ENCODE measurements at regions of chr3 and their contacts with region 1.

Region 1: DNA sequence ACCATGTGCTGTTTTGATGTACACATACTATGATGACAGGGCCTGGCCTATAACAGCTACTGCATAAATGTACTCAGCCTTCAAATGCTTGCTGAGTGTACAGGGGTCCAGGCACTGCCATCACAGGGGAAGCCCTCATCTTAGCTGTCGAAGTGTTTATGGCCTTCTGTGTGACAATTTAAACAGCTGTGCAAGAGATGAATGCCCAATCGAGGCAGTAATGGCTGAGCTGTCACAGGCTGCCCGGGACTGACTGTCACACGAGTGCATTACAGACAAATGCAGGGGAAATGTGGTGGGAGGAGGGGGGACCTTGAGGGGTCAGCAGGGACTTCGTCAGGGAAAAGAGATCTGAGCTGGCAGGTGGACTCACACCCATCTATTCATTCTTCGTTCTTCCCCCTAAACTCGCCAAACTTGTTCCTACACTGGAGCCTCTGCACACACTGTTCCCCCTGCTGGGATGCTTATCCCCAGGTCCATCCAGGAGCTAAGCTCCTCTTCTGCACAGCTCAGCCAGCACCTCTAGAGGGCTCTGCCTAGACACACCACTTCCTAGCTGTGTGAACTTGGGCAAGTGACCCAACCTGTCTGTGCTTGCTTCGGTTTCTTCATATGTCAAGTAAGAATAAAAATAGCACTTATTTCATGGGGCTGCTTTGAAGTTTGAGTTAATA is 156.2 kb upstream of the IQSEC1 start:
- DNase-seq: peak in 1 of 2 experiments; percentile 59
- H3K4me3 ChIP-seq: no peak overlapping the region
- H3K27ac ChIP-seq: no peak overlapping the region
- H3K4me1 ChIP-seq: peaks cover 0 to 3% (median under 1%) of the 10 kb centered on the region in 4 experiments; a peak in 2 of 7 replicates
- H3K27me3 ChIP-seq: no peaks in the 10 kb centered on the region
- CTCF ChIP-seq: peak in 2 of 3 experiments; percentile 78 to 92; a peak in 3 of 4 replicates
- EP300 ChIP-seq: peak in 1 of 2 experiments; percentile 33; a peak in 1 of 3 replicates
- POLR2A ChIP-seq: no peak
- RAD21 ChIP-seq: peak; percentile 65 to 81

Region 2: DNA sequence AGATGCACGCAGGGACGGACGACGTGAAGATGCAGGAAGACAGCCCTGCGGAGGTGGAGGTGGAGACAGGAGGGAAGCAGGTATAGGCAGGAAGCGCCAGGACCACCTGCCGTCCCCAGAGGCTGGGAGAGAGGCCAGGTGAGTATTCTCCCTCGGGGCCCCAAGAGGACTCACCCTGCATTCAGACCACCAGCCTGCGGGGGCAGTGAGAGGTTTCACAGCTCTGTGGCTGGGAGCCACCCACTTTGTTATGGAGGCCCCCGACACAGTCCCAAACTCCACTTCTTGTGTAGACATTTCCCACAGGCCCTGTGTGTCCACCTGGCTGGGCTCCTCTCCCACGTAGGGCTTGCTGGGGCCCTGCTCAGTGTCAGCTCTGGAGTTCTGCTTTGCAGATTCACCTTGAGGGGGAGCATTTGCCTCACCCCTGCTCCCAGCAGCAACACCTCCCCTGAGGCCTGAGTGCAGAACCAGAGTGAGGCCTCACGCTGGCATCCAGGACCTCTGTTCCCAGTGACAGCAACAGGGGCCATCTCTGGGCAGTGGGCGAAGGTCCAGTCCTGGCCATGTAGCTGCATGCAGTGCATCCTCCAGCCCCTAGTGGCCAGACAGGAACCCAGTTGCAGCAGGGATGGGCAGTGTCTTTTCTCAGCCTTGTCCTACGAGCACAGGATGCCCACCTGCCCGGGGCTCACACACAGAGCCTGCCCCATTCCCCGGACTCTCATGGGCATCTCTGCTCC is 36.8 kb before region 1 on chr3:
- CTCF ChIA-PET with region 1: interaction called, 14 read pairs
- POLR2A ChIA-PET with region 1: no interaction called
- DNase-seq: no peak
- H3K4me3 ChIP-seq: no peak overlapping the region
- H3K27ac ChIP-seq: no peak overlapping the region
- H3K4me1 ChIP-seq: peaks cover 0 to 7% (median 2%) of the 10 kb centered on the region in 4 experiments; a peak in 4 of 7 replicates
- H3K27me3 ChIP-seq: no peaks in the 10 kb centered on the region
- CTCF ChIP-seq: peak in 2 of 3 experiments; percentile 56 to 84; a peak in 3 of 4 replicates
- EP300 ChIP-seq: no peak
- POLR2A ChIP-seq: no peak
- RAD21 ChIP-seq: peak in 1 of 2 experiments; percentile 44; a peak in 2 of 4 replicates

Region 3: DNA sequence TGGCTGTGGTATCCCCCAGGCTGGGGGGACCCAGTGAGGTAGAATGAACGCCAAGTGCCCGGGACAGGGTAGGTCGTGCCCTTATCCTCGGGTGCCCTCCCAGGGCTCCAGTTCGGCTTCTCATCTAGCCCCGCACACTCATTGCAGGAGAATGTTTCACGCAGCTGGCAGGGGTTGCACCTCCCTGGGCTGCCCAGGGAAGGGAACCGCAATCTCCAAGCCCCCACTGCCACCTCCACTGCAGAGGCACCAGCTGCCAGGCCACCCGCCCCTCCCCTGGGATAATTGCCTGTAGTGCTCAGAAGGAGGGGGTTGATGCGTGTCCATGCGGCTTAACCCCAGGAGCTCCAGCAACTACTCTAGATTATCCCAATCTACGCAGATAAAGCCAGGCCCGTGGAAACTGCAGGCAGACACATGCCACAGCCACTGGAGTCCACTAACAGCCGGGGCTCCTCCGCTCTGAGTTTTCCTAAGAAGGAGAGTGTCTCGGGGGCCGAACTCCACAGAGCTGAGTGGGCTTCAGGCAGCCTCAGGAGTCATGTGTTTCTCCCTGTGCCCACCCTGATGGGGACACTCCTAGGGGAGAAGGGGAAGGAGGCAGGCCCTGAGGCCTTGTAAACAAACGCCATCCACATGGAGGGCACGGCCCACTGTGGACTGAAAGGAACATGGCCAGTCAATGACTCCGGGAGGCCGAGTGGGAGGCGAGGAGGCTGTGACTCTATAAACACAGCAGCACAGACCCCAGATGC is 19.0 kb before region 1 on chr3:
- CTCF ChIA-PET with region 1: interaction called, 15 read pairs
- POLR2A ChIA-PET with region 1: interaction called, 3 read pairs
- DNase-seq: no peak
- H3K4me3 ChIP-seq: no peak overlapping the region
- H3K27ac ChIP-seq: no peak overlapping the region
- H3K4me1 ChIP-seq: no peaks in the 10 kb centered on the region
- H3K27me3 ChIP-seq: 0 out of 7 replicates have a peak, but pooled peaks cover 0 to 1% (median 0%) of the 10 kb centered on the region in 4 experiments
- CTCF ChIP-seq: no peak
- EP300 ChIP-seq: no peak
- POLR2A ChIP-seq: no peak
- RAD21 ChIP-seq: no peak

Region 4: GRCh38 chr3:13245615-13245978 is 16.2 kb after region 1 on chr3:
- CTCF ChIA-PET with region 1: interaction called, 49 read pairs
- POLR2A ChIA-PET with region 1: interaction called, 4 read pairs
- DNase-seq: no peak
- H3K4me3 ChIP-seq: no peak overlapping the region
- H3K27ac ChIP-seq: no peak overlapping the region
- H3K4me1 ChIP-seq: peaks cover 0 to 4% (median 0%) of the 10 kb centered on the region in 4 experiments; a peak in 3 of 7 replicates
- H3K27me3 ChIP-seq: no peaks in the 10 kb centered on the region
- CTCF ChIP-seq: no peak
- EP300 ChIP-seq: no peak
- POLR2A ChIP-seq: no peak
- RAD21 ChIP-seq: no peak

Region 5: DNA sequence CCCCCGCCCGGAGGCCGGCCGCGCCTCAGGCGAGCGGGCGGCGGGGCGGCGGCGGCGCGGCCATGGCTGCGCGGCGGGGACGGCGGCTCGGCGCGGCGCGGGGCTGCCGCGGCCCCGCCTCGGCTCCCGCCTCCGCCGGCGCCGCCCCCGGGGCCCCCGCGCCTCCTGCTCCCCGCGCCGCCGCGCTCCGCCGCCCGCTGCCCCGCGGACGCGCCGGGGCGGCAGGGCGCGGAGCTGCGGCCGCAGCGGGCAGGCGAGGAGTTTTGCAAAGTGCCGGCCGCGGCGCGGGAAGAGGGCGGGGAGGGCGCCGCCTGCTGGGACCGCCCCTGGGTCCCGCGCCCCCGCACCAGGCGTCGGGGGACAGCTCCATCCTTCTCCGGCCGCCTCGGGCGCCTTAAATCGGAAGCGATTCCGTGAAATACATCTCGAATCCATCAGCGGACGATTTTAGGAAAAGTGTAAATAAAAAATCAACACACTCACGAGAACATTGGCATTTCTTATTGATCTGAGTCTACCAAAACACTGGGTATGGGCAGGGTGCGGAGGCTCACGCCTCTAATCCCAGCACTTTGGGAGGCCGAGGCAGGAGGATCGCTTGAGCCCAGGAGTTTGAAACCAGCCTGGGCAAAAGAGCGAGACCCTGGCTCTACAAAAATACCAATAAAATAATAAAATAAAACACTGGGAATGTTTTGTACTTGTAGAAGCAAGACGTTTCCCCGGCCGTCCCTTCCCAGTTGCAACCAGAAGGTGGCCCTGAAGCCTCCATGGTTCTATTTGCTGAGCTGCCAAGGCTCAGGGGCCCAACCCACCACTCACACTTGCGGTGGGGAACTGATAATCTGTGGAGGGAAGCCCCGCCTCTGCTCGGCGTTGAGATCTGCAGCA is 53.8 kb after region 1 on chr3:
- CTCF ChIA-PET with region 1: interaction called, 12 read pairs
- POLR2A ChIA-PET with region 1: no interaction called
- DNase-seq: peak in 1 of 2 experiments; percentile 74
- H3K4me3 ChIP-seq: peak overlapping the region; percentile 18 to 67 (median 35)
- H3K27ac ChIP-seq: no peak overlapping the region
- H3K4me1 ChIP-seq: peaks cover 0 to 11% (median 6%) of the 10 kb centered on the region in 4 experiments; a peak in 5 of 7 replicates
- H3K27me3 ChIP-seq: peaks cover 7 to 26% (median 19%) of the 10 kb centered on the region in 4 experiments
- CTCF ChIP-seq: peak in 2 of 3 experiments; percentile 62 to 65; a peak in 3 of 4 replicates
- EP300 ChIP-seq: no peak
- POLR2A ChIP-seq: no peak
- RAD21 ChIP-seq: peak; percentile 56 to 69

Measured in H1 (cell line).